Right cardiac atrium (tissue), 5 donors: ENCODE measurements at regions of chr19 and their contacts with region 1.

Region 1: DNA sequence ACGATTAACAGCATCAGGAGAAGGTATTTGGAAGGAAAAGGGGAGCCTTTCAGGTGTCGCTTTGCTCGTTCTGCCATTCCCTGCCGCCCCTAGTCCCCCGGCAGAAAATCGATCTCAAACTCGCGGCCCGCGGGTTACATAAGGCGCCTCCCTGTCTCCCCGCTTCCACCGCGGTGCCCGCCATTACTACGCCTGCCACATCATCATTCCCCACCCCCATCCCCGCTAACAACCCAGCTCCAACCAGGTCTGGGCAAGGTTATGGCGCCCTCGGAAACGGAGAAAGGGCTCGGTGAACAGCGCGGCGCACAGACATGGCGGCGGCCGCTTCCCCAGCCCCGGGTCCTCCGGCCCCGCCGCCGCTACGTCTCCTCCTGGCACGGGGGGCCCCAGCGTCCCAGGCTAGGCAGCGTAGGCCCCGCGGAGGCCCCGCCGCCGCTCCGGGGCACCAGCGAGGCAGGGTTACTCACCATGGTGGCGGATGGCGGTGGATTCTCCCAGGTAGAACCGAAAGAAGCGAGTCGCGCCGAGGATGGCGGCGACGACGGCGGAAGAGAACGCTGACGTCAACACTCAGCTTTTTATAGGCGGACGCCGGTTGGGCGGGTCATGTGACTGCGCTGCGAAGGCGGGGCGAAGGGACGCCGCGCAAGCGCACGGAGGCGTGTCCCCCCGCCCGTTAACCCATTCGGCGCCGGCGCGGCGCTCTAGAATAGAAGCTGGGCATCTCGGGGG is at the start of gene EEF2:
- DNase-seq: peak; percentile 92 to 96 (median 95)
- ATAC-seq: peak; percentile 68 to 77
- H3K4me3 ChIP-seq: peak within 1 kb of the TSS; percentile 77
- H3K27ac ChIP-seq: peak within 1 kb of the TSS; percentile 86
- H3K4me1 ChIP-seq: no peaks in the 10 kb centered on the region
- H3K27me3 ChIP-seq: no peaks in the 10 kb centered on the region
- total RNA-seq, gene EEF2: 2,000 to 2,630 (median 2,240) TPM

Region 2: GRCh38 chr19:4019578-4019977 is 34.5 kb after region 1 on chr19:
- intact Hi-C with region 1: no loop called
- DNase-seq: no peak
- ATAC-seq: no peak
- H3K4me3 ChIP-seq: no peak overlapping the region
- H3K27ac ChIP-seq: no peak overlapping the region
- H3K4me1 ChIP-seq: no peaks in the 10 kb centered on the region
- H3K27me3 ChIP-seq: no peaks in the 10 kb centered on the region

Region 3: GRCh38 chr19:4123615-4124568 is 138.8 kb after region 1 on chr19 and contains the start of gene MAP2K2:
- intact Hi-C with region 1: loop called in 1 of 4 experiments (anchors 10 kb)
- DNase-seq: peak; percentile 96 to 99 (median 98)
- ATAC-seq: peak; percentile 97
- H3K4me3 ChIP-seq: peak within 1 kb of the TSS; percentile 90
- H3K27ac ChIP-seq: peak within 1 kb of the TSS; percentile 31
- H3K4me1 ChIP-seq: peaks cover 9% of the 10 kb centered on the region
- H3K27me3 ChIP-seq: no peaks in the 10 kb centered on the region
- total RNA-seq, gene MAP2K2: 113 to 134 (median 121) TPM

Region 4: DNA sequence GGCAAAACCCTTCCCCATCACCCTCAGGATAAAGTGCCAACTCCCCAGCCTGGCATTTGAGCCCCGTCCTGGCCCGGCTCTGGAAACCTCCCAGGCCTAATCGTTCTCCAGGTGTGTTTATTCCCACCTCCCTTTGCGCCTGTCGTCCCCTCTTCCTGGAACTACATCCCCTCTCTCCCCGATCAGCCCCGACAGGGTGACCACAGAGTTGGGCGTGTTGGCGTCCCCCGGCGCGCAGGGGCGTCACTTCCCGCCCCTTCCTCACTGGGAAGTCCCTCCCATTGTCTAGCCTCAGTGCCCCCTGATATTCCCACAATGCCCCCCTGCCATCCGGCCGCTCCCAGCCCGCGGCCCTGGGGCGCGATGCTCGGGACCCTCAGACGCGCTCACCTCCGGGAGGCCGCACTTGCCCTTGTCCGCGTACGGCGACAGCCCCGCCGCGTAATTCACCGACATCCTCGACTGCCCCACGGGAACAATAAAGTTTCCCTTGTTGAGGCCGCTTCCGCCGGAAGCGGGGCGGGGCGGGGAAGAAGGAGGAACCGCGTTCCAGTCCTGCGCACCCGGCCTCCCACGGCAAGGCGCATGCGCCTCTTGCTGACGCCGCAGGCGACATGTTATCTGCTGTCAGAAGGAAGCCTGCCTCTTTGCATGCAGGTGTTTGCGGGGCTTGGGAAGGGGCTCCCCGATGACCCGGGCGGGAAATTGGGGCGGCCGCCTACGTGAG is 197.2 kb after region 1 on chr19 and contains the starts of genes ANKRD24 and SIRT6:
- intact Hi-C with region 1: loop called in 1 of 4 experiments (anchors 10 kb)
- DNase-seq: peak; percentile 96 to 99 (median 98)
- ATAC-seq: peak; percentile 96
- H3K4me3 ChIP-seq: peak within 1 kb of the TSS; percentile 63
- H3K27ac ChIP-seq: peak within 1 kb of the TSS; percentile 54
- H3K4me1 ChIP-seq: peaks cover 2% of the 10 kb centered on the region
- H3K27me3 ChIP-seq: no peaks in the 10 kb centered on the region
- total RNA-seq, gene ANKRD24: 0.31 to 0.88 (median 0.41) TPM
- total RNA-seq, gene SIRT6: 11.2 to 16.6 (median 13.1) TPM

Region 5: GRCh38 chr19:4199699-4200293 is 214.7 kb after region 1 on chr19:
- intact Hi-C with region 1: loop called in 1 of 4 experiments (anchors 5 kb)
- DNase-seq: peak in 1 of 3 donors; percentile 29
- ATAC-seq: peak in 1 of 2 donors; percentile 19
- H3K4me3 ChIP-seq: no peak overlapping the region
- H3K27ac ChIP-seq: no peak overlapping the region
- H3K4me1 ChIP-seq: no peaks in the 10 kb centered on the region
- H3K27me3 ChIP-seq: no peaks in the 10 kb centered on the region